CD4-positive, alpha-beta memory T cell (primary cell): ENCODE measurements at regions of chr14 and their contacts with region 1.

Region 1: DNA sequence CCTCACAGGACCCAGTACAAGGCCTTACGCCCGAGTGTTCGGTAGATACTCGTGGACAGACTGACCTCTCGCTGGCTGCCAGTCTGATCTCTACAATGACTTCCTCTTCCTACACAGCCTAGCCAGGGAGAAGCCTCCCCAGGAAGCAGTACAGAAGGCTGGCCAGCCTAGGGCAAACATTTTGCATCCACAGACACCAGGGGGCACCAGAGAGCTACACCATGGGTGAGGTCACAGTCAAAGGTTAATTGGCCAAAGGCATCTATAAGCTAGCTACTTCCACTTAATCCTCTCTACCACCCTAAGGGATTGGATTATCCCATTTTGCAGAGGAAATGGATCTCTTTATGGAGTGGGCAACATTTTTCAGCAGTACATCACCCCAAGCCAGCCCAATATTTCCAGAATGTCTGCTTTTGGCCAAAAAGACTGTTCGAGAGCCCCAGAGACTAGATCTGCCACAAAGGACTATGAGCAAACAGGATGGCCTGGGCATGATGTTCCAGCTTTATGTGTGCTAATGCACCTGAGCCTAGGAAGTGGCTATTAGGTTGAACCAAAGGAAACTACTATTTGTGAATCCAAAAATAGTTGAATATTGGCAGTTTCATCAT is 14.6 kb upstream of the PNMA1 start:
- DNase-seq: peak; percentile 75 to 84 (median 80)
- H3K4me3 ChIP-seq: no peak overlapping the region
- H3K4me3 Mint-ChIP-seq: no peak overlapping the region
- H3K27ac ChIP-seq: peak overlapping the region; percentile 28
- H3K27ac Mint-ChIP-seq: peak overlapping the region; percentile 19 to 94 (median 84)
- H3K4me1 ChIP-seq: peaks cover 43% of the 10 kb centered on the region
- H3K4me1 Mint-ChIP-seq: peaks cover 12 to 40% (median 23%) of the 10 kb centered on the region in 4 donors
- H3K27me3 ChIP-seq: no peaks in the 10 kb centered on the region
- H3K27me3 Mint-ChIP-seq: no peaks in the 10 kb centered on the region

Region 2: DNA sequence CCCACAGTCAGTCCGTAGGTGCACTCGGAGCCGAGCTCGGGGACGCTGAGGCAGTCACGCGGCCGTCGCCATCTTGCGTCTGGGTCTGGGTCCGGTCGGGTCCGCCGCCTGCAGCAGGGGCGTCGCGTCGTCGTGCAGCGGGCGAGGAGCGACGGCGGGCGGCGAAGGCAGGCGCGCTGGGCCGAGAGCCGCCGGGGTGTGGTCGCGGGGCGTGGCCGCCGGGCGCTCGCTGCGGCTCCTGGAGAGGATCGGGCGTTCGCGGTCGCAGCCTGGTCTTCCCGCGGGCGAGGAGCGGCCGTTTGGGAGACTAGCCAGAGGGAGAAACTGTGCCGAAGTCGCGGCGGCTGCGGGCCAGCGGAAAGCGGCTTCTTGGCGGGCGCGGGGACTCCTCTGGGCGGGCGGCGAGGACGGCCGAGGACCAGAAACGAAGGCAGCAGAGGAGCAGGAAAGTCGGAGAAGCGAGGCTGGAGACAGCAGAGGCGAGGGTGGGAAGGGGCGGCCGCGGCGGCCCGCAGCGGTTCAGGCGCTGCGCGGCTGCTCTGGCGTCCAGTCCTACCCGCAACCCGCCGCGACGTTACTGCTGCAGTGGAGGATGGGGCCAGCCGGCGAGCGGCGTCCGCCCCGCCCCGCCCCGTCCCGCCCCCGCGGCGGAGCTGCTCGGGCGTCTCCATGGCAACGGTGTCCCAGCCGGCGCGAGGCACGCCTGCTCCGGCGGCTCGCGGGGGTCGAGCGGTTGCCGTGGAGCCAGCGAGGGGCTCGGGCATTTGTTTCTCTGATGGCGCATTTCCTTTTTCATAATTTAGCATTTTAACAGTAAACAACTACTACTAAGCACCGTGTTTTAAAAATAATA is 14.8 kb before region 1 on chr14 and contains the start of gene PNMA1:
- CTCF ChIA-PET with region 1: interaction called, 19 read pairs
- POLR2A ChIA-PET with region 1: interaction called, 13 read pairs
- intact Hi-C with region 1: no loop called
- DNase-seq: peak; percentile 84 to 87 (median 85)
- H3K4me3 ChIP-seq: peak within 1 kb of the TSS; percentile 92 to 96
- H3K4me3 Mint-ChIP-seq: peak within 1 kb of the TSS; percentile 89 to 100 (median 98)
- H3K27ac ChIP-seq: peak within 1 kb of the TSS; percentile 80
- H3K27ac Mint-ChIP-seq: peak within 1 kb of the TSS; percentile 89 to 99 (median 95)
- H3K4me1 ChIP-seq: peaks cover 26% of the 10 kb centered on the region
- H3K4me1 Mint-ChIP-seq: peaks cover 18 to 35% (median 24%) of the 10 kb centered on the region in 4 donors
- H3K27me3 ChIP-seq: no peaks in the 10 kb centered on the region
- H3K27me3 Mint-ChIP-seq: no peaks in the 10 kb centered on the region
- total RNA-seq, gene PNMA1: 53.3 to 59.3 TPM

Region 3: GRCh38 chr14:73759714-73760597 is 31.1 kb after region 1 on chr14:
- CTCF ChIA-PET with region 1: interaction called, 175 read pairs
- POLR2A ChIA-PET with region 1: interaction called, 62 read pairs
- intact Hi-C with region 1: loop called (anchors 1 kb)
- DNase-seq: peak; percentile 95 to 98 (median 96)
- H3K4me3 ChIP-seq: peak overlapping the region; percentile 2 to 73
- H3K4me3 Mint-ChIP-seq: peak overlapping the region; percentile 88 to 97 (median 92)
- H3K27ac ChIP-seq: peak overlapping the region; percentile 98
- H3K27ac Mint-ChIP-seq: peak overlapping the region; percentile 96 to 100 (median 99)
- H3K4me1 ChIP-seq: peaks cover 73% of the 10 kb centered on the region
- H3K4me1 Mint-ChIP-seq: peaks cover 66 to 90% (median 75%) of the 10 kb centered on the region in 4 donors
- H3K27me3 ChIP-seq: no peaks in the 10 kb centered on the region
- H3K27me3 Mint-ChIP-seq: no peaks in the 10 kb centered on the region

Region 4: GRCh38 chr14:73777401-73777800 is 48.6 kb after region 1 on chr14:
- CTCF ChIA-PET with region 1: interaction called, 63 read pairs
- POLR2A ChIA-PET with region 1: interaction called, 5 read pairs
- intact Hi-C with region 1: loop called (anchors 1 kb)
- DNase-seq: no peak
- H3K4me3 ChIP-seq: no peak overlapping the region
- H3K4me3 Mint-ChIP-seq: peak overlapping the region in 3 of 8 donors; percentile 38 to 45 (median 43)
- H3K27ac ChIP-seq: no peak overlapping the region
- H3K27ac Mint-ChIP-seq: peak overlapping the region; percentile 52 to 87 (median 81)
- H3K4me1 ChIP-seq: peaks cover 64% of the 10 kb centered on the region
- H3K4me1 Mint-ChIP-seq: peaks cover 43 to 83% (median 62%) of the 10 kb centered on the region in 4 donors
- H3K27me3 ChIP-seq: no peaks in the 10 kb centered on the region
- H3K27me3 Mint-ChIP-seq: no peaks in the 10 kb centered on the region

Region 5: DNA sequence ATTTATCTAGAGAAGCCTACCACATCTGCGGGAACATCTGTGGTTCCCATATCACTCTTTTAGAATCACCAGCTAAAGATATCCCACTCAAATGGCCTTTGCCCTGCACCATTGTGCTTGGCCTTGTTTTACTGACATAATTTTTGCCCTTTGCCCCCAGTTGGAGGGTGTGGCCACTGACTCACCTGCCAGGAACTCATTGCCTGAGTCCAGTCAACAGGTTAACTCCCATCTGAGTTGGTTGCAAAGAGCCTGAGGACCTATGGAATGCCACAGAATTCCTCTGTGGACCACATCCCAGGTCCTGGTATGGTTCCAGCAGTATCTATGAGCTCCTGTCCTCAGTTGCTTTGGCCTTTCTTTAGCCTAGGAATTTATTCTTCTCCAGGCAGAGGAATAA is 67.1 kb after region 1 on chr14:
- CTCF ChIA-PET with region 1: interaction called, 15 read pairs
- POLR2A ChIA-PET with region 1: no interaction called
- intact Hi-C with region 1: no loop called
- DNase-seq: no peak
- H3K4me3 ChIP-seq: no peak overlapping the region
- H3K4me3 Mint-ChIP-seq: no peak overlapping the region
- H3K27ac ChIP-seq: no peak overlapping the region
- H3K27ac Mint-ChIP-seq: peak overlapping the region in 1 of 7 donors; percentile 12
- H3K4me1 ChIP-seq: no peaks in the 10 kb centered on the region
- H3K4me1 Mint-ChIP-seq: no peaks in the 10 kb centered on the region
- H3K27me3 ChIP-seq: no peaks in the 10 kb centered on the region
- H3K27me3 Mint-ChIP-seq: no peaks in the 10 kb centered on the region

Region 6: GRCh38 chr14:73816393-73816816 is 87.6 kb after region 1 on chr14:
- CTCF ChIA-PET with region 1: interaction called, 272 read pairs
- POLR2A ChIA-PET with region 1: no interaction called
- intact Hi-C with region 1: no loop called
- DNase-seq: no peak
- H3K4me3 ChIP-seq: no peak overlapping the region
- H3K4me3 Mint-ChIP-seq: no peak overlapping the region
- H3K27ac ChIP-seq: no peak overlapping the region
- H3K27ac Mint-ChIP-seq: no peak overlapping the region
- H3K4me1 ChIP-seq: no peaks in the 10 kb centered on the region
- H3K4me1 Mint-ChIP-seq: no peaks in the 10 kb centered on the region
- H3K27me3 ChIP-seq: no peaks in the 10 kb centered on the region
- H3K27me3 Mint-ChIP-seq: peaks cover 0 to 3% of the 10 kb centered on the region in 2 donors

Region 7: DNA sequence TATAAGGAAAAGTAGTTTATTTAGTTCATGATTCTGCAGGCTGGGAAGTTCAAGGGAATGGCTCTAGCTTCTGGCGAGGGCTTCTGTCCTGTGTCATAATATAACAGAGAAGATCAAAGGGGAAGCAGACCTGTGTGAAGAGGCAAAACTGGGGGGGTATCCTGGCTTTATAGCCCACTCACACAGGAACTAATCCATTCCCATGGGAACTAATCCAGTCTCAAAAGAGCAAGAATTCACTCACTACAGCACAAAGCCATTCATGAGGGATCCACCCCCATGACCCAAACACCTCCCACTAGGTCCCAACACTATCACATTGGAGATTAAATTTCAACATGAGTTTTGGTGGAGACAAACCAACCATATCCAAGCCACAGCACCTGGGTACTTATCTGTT is 348.6 kb after region 1 on chr14:
- CTCF ChIA-PET with region 1: no interaction called
- POLR2A ChIA-PET with region 1: no interaction called
- intact Hi-C with region 1: no loop called
- DNase-seq: no peak
- H3K4me3 ChIP-seq: no peak overlapping the region
- H3K4me3 Mint-ChIP-seq: no peak overlapping the region
- H3K27ac ChIP-seq: no peak overlapping the region
- H3K27ac Mint-ChIP-seq: peak overlapping the region in 2 of 7 donors; percentile 8 to 64
- H3K4me1 ChIP-seq: no peaks in the 10 kb centered on the region
- H3K4me1 Mint-ChIP-seq: peaks cover 0 to 6% (median 2%) of the 10 kb centered on the region in 4 donors
- H3K27me3 ChIP-seq: no peaks in the 10 kb centered on the region
- H3K27me3 Mint-ChIP-seq: no peaks in the 10 kb centered on the region